HAP-1 (cell line): ENCODE measurements at regions of chr3 and their contacts with region 1.

Region 1: GRCh38 chr3:50358911-50359759 is at the start of gene TMEM115:
- DNase-seq: peak; percentile 98 to 99
- H3K4me3 ChIP-seq: peak within 1 kb of the TSS; percentile 74
- H3K4me1 ChIP-seq: peaks cover 23% of the 10 kb centered on the region
- H3K27me3 ChIP-seq: no peaks in the 10 kb centered on the region

Region 2: GRCh38 chr3:51384726-51385473 is 1025.8 kb after region 1 on chr3 and contains the start of gene MANF:
- in situ Hi-C with region 1: loop called (anchors 10 kb)
- DNase-seq: peak; percentile 94 to 98
- H3K4me3 ChIP-seq: peak within 1 kb of the TSS; percentile 96
- H3K4me1 ChIP-seq: peaks cover 17% of the 10 kb centered on the region
- H3K27me3 ChIP-seq: no peaks in the 10 kb centered on the region